ENCODE measurements at regions of chr4 and their contacts with region 1.

Region 1: GRCh38 chr4:188781655-188782054 is 642.4 kb downstream of the TRIML1 start:
- DNase-seq: peak in 1 of 2 experiments; percentile 14
- H3K4me3 ChIP-seq: no peak overlapping the region
- H3K4me3 Mint-ChIP-seq: no peak overlapping the region
- H3K27ac Mint-ChIP-seq: no peak overlapping the region
- H3K4me1 ChIP-seq: no peaks in the 10 kb centered on the region
- H3K4me1 Mint-ChIP-seq: no peaks in the 10 kb centered on the region
- H3K27me3 ChIP-seq: no peaks in the 10 kb centered on the region
- H3K27me3 Mint-ChIP-seq: no peaks in the 10 kb centered on the region
- CTCF ChIP-seq: peak; percentile 24 to 46

Region 2: DNA sequence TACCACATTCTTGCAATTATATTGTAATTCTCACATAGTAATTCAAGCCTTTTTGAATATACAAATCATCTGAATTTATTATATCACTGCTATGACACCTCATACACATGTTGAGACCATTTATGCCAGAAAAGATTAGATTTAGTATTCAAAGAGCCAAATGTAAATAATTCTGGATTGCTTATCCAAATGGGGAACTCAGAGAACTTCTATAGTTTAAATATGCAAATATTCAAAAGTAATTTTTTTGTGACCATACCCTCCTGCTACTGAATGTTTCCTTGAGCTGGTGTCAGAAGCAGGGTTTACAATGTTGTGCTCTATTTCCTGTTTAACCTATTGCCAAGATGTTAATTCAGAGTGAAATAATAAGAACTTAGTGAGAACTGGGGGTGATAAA is 270.2 kb before region 1 on chr4:
- CTCF ChIA-PET with region 1: no interaction called
- POLR2A ChIA-PET with region 1: no interaction called
- intact Hi-C with region 1: no loop called
- DNase-seq: no peak
- H3K4me3 ChIP-seq: no peak overlapping the region
- H3K4me3 Mint-ChIP-seq: no peak overlapping the region
- H3K27ac Mint-ChIP-seq: no peak overlapping the region
- H3K4me1 ChIP-seq: no peaks in the 10 kb centered on the region
- H3K4me1 Mint-ChIP-seq: peaks cover 7% of the 10 kb centered on the region
- H3K27me3 ChIP-seq: no peaks in the 10 kb centered on the region; the same call in 1 of the 2 replicates
- H3K27me3 Mint-ChIP-seq: no peaks in the 10 kb centered on the region
- CTCF ChIP-seq: no peak

Region 3: DNA sequence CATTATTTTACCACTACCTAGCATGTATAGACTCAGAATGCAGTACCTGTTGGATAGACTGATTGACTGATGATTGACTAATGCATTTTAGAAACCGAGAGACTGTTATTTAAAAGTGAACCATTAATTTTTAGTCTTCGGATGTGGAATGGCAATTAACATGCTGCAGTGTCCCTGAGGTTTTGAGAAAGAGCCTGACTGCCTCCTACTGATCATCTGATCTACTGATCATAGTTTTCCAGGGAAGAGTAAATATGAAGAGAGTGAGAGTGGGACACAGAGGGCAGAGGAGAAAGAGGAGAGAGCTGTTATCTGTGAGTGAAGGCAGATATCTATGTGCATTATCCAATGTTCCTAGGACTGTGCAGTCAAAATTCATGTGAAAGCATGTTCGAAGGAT is 122.3 kb after region 1 on chr4:
- CTCF ChIA-PET with region 1: no interaction called
- POLR2A ChIA-PET with region 1: no interaction called
- intact Hi-C with region 1: loop called (anchors 2 kb)
- DNase-seq: no peak
- H3K4me3 ChIP-seq: no peak overlapping the region
- H3K4me3 Mint-ChIP-seq: no peak overlapping the region
- H3K27ac Mint-ChIP-seq: no peak overlapping the region
- H3K4me1 ChIP-seq: no peaks in the 10 kb centered on the region
- H3K4me1 Mint-ChIP-seq: no peaks in the 10 kb centered on the region
- H3K27me3 ChIP-seq: no peaks in the 10 kb centered on the region
- H3K27me3 Mint-ChIP-seq: no peaks in the 10 kb centered on the region
- CTCF ChIP-seq: no peak

Region 4: DNA sequence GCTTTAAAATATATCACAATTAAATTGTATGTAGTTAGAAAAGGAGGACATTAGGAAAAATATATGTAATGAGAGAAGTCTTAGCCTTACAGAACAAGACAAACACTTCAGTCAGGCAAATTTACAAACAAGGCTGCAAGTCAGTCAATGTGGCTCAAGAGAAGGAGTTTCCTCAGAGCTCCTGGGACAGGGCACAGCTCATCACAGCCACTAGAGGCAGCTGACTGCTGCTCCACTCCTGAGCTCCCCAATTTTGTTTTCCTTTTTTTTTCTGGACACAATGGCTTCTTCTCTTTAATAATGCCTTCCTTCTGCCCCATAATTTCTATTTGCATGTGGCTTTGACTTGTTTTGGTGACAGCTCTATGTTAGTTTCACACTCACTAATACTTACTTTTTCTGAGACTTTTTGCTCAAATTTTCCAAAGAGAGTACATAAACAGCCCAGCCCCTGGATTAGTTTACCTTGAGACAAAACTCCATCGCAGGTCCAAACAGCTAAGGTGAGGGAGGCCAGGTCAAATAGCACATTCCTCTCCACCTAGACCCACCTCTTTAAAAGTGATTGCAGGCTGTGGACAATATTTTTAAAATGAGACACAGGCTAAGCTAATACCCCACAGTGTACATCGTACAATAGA is 308.6 kb after region 1 on chr4:
- CTCF ChIA-PET with region 1: no interaction called
- POLR2A ChIA-PET with region 1: interaction called, 12 read pairs
- intact Hi-C with region 1: no loop called
- DNase-seq: peak in 1 of 2 experiments; percentile 3
- H3K4me3 ChIP-seq: no peak overlapping the region
- H3K4me3 Mint-ChIP-seq: no peak overlapping the region
- H3K27ac Mint-ChIP-seq: no peak overlapping the region
- H3K4me1 ChIP-seq: no peaks in the 10 kb centered on the region
- H3K4me1 Mint-ChIP-seq: no peaks in the 10 kb centered on the region
- H3K27me3 ChIP-seq: no peaks in the 10 kb centered on the region
- H3K27me3 Mint-ChIP-seq: no peaks in the 10 kb centered on the region
- CTCF ChIP-seq: peak in 1 of 2 experiments; percentile 32

Region 5: GRCh38 chr4:189124149-189124758 is 342.6 kb after region 1 on chr4:
- CTCF ChIA-PET with region 1: no interaction called
- POLR2A ChIA-PET with region 1: no interaction called
- intact Hi-C with region 1: loop called (anchors 2 kb)
- DNase-seq: no peak
- H3K4me3 ChIP-seq: no peak overlapping the region
- H3K4me3 Mint-ChIP-seq: no peak overlapping the region
- H3K27ac Mint-ChIP-seq: no peak overlapping the region
- H3K4me1 ChIP-seq: no peaks in the 10 kb centered on the region
- H3K4me1 Mint-ChIP-seq: no peaks in the 10 kb centered on the region
- H3K27me3 ChIP-seq: no peaks in the 10 kb centered on the region
- H3K27me3 Mint-ChIP-seq: peaks cover 5% of the 10 kb centered on the region
- CTCF ChIP-seq: peak in 1 of 2 experiments; percentile 15

Region 6: GRCh38 chr4:189279191-189279590 is 497.5 kb after region 1 on chr4:
- CTCF ChIA-PET with region 1: no interaction called
- POLR2A ChIA-PET with region 1: no interaction called
- intact Hi-C with region 1: no loop called
- DNase-seq: no peak
- H3K4me3 ChIP-seq: no peak overlapping the region
- H3K4me3 Mint-ChIP-seq: no peak overlapping the region
- H3K27ac Mint-ChIP-seq: no peak overlapping the region
- H3K4me1 ChIP-seq: no peaks in the 10 kb centered on the region
- H3K4me1 Mint-ChIP-seq: no peaks in the 10 kb centered on the region
- H3K27me3 ChIP-seq: no peaks in the 10 kb centered on the region
- H3K27me3 Mint-ChIP-seq: no peaks in the 10 kb centered on the region
- CTCF ChIP-seq: no peak

Region 7: GRCh38 chr4:189921058-189921457 is 1139.4 kb after region 1 on chr4:
- CTCF ChIA-PET with region 1: no interaction called
- POLR2A ChIA-PET with region 1: no interaction called
- intact Hi-C with region 1: no loop called
- DNase-seq: no peak
- H3K4me3 ChIP-seq: no peak overlapping the region
- H3K4me3 Mint-ChIP-seq: no peak overlapping the region
- H3K27ac Mint-ChIP-seq: no peak overlapping the region
- H3K4me1 ChIP-seq: no peaks in the 10 kb centered on the region
- H3K4me1 Mint-ChIP-seq: no peaks in the 10 kb centered on the region
- H3K27me3 ChIP-seq: no peaks in the 10 kb centered on the region
- H3K27me3 Mint-ChIP-seq: no peaks in the 10 kb centered on the region
- CTCF ChIP-seq: no peak

Measured in Caco-2 (cell line).